Activated CD8-positive, alpha-beta memory T cell treated with anti-CD3 and anti-CD28 coated beads, Interleukin-2, amount 10 ng/mL, durations not matched to agents 7 days and 5 days (primary cell): ENCODE measurements at regions of chr4 and their contacts with region 1.

Region 1: DNA sequence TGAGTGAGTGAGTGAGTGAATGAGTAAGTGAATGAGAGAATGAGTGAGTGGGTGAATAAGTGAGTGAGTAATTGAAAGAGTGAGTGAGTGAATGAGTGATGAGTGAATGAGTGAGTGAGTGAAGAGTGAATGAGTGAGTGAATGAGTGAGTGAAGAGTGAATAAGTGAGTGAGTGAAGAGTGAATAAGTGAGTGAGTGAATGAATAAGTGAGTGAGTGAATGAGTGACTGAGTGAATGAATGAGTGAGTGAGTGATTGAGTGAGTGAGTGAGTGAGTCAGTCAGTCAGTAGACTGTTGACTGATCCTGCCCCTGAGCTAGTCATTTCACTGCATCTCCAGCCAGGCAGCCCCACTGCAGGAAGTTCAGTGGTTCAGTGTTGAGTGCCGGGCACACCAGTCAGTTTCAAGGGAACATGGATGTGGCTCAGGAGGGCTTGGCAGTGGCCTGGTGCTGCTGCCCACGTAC is 228.4 kb upstream of the PSAPL1 start:
- DNase-seq: peak; percentile 73
- ATAC-seq: peak; percentile 84
- H3K4me3 Mint-ChIP-seq: no peak overlapping the region
- H3K27ac Mint-ChIP-seq: no peak overlapping the region
- H3K4me1 Mint-ChIP-seq: peaks cover 9% of the 10 kb centered on the region
- H3K27me3 Mint-ChIP-seq: peaks cover 14% of the 10 kb centered on the region

Region 2: DNA sequence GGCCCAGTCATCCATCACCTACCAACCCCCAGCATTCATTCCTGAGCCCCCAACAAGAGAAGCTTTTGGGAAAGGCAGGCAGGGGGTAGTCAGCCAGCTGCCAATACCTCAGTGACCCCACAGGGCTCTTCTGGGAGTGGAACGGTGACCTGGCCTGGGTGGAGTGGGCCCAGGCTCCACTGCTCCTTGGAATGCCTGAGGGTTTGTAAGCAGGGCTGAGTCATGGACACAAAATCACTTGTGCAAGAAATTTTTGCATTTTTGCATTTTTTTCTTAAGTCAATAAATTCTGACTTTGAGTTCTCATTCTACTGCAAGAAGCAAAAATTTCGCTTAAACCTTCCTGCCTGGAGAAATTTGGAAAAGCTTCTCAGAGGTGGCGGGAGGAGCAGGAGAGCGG is 452.3 kb before region 1 on chr4:
- CTCF ChIA-PET with region 1: no interaction called
- DNase-seq: no peak
- ATAC-seq: no peak
- H3K4me3 Mint-ChIP-seq: no peak overlapping the region
- H3K27ac Mint-ChIP-seq: no peak overlapping the region
- H3K4me1 Mint-ChIP-seq: no peaks in the 10 kb centered on the region
- H3K27me3 Mint-ChIP-seq: no peaks in the 10 kb centered on the region

Region 3: GRCh38 chr4:7651461-7651921 is 11.6 kb before region 1 on chr4:
- CTCF ChIA-PET with region 1: interaction called, 11 read pairs
- DNase-seq: no peak
- ATAC-seq: no peak
- H3K4me3 Mint-ChIP-seq: no peak overlapping the region
- H3K27ac Mint-ChIP-seq: peak overlapping the region; percentile 87
- H3K4me1 Mint-ChIP-seq: peaks cover 73% of the 10 kb centered on the region
- H3K27me3 Mint-ChIP-seq: peaks cover 3% of the 10 kb centered on the region